IMR-90 (cell line): ENCODE measurements at regions of chr15 and their contacts with region 1.

Region 1: GRCh38 chr15:50145451-50145872 is 26.4 kb upstream of the ATP8B4 start:
- DNase-seq: peak; percentile 88
- ATAC-seq: peak; percentile 86
- H3K4me3 ChIP-seq: no peak overlapping the region
- H3K27ac ChIP-seq: peak overlapping the region; percentile 44
- H3K4me1 ChIP-seq: no peaks in the 10 kb centered on the region; the same call in 1 of the 2 replicates
- H3K27me3 ChIP-seq: no peaks in the 10 kb centered on the region
- CTCF ChIP-seq: peak; percentile 60
- POLR2A ChIP-seq: no peak
- RAD21 ChIP-seq: peak; percentile 83

Region 2: DNA sequence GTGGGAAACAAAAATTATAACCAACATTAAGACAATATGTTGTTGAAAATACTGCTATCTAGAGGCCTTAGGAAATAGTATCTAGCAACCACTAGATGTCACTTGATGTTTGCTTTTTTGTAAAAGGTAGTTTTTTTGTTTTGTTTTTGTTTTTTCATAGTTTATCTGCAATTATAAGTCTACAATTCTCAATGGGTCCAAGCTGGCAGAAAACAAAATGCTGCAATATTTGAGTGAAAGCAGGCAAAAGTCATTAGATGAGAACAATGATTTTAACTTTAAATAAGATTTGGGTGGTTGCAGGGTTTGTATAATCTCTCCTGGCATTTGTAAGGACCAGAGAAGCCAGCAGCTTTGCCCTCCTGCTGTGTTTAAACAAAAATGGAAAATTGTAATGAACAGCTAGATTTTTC is 1787.2 kb before region 1 on chr15:
- CTCF ChIA-PET with region 1: no interaction called
- POLR2A ChIA-PET with region 1: no interaction called
- dilution Hi-C with region 1: no loop called
- in situ Hi-C with region 1: loop called (anchors 10 kb)
- intact Hi-C with region 1: no loop called
- DNase-seq: peak; percentile 64
- ATAC-seq: peak; percentile 59
- H3K4me3 ChIP-seq: no peak overlapping the region
- H3K27ac ChIP-seq: 0 out of 2 replicates have a peak overlapping the region, but pooled peaks have one; percentile 40
- H3K4me1 ChIP-seq: peaks cover 15% of the 10 kb centered on the region
- H3K27me3 ChIP-seq: no peaks in the 10 kb centered on the region
- CTCF ChIP-seq: peak; percentile 75
- POLR2A ChIP-seq: no peak
- RAD21 ChIP-seq: peak; percentile 81

Region 3: GRCh38 chr15:48722764-48723661 is 1422.4 kb before region 1 on chr15:
- CTCF ChIA-PET with region 1: no interaction called
- POLR2A ChIA-PET with region 1: no interaction called
- dilution Hi-C with region 1: no loop called
- in situ Hi-C with region 1: loop called (anchors 25 kb)
- intact Hi-C with region 1: no loop called
- DNase-seq: peak; percentile 94
- ATAC-seq: peak; percentile 91
- H3K4me3 ChIP-seq: no peak overlapping the region
- H3K27ac ChIP-seq: peak overlapping the region; percentile 16
- H3K4me1 ChIP-seq: peaks cover 17% of the 10 kb centered on the region
- H3K27me3 ChIP-seq: no peaks in the 10 kb centered on the region
- CTCF ChIP-seq: no peak
- POLR2A ChIP-seq: no peak
- RAD21 ChIP-seq: no peak

Region 4: DNA sequence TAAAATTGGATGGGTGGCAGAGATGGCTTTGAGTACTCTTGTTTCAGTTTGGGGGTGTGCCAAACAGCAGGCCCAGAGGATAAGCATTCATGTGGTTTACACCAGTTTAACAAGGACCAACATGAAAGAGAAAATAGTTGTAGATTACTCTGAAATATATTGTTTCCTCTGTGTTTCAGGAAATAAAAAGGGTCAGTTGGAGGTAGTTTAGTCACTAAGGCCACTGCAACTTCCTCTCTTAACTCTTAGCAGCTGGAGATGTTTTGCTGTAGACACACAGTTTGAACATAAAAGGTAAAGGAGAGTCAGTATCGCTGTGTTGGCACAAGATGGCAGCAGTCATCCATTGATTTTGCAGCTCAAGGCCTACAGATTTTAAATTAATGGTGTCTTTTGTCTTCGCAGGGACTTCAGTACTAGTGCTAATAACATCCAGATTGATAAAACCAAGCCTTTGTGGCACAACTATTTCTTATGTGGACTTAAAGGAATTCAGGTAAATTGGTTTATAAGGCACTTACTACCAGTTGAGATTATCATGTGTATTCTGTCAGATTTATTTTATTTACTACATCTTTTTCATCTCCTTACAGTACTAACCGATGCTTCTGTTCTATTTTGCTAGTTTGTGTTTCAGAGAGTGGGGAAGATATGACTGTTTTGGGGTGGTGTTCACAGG is 909.9 kb before region 1 on chr15:
- CTCF ChIA-PET with region 1: no interaction called
- POLR2A ChIA-PET with region 1: no interaction called
- dilution Hi-C with region 1: no loop called
- in situ Hi-C with region 1: loop called (anchors 5 kb)
- intact Hi-C with region 1: loop called (anchors 1 kb)
- DNase-seq: peak; percentile 92
- ATAC-seq: peak; percentile 88
- H3K4me3 ChIP-seq: no peak overlapping the region
- H3K27ac ChIP-seq: peak overlapping the region; percentile 70; the same call in 1 of the 2 replicates
- H3K4me1 ChIP-seq: peaks cover 3% of the 10 kb centered on the region
- H3K27me3 ChIP-seq: no peaks in the 10 kb centered on the region
- CTCF ChIP-seq: peak; percentile 91
- POLR2A ChIP-seq: no peak
- RAD21 ChIP-seq: peak; percentile 94

Region 5: GRCh38 chr15:49876401-49877038 is 268.9 kb before region 1 on chr15:
- CTCF ChIA-PET with region 1: no interaction called
- POLR2A ChIA-PET with region 1: no interaction called
- dilution Hi-C with region 1: no loop called
- in situ Hi-C with region 1: no loop called
- intact Hi-C with region 1: loop called (anchors 10 kb)
- DNase-seq: no peak
- ATAC-seq: no peak
- H3K4me3 ChIP-seq: no peak overlapping the region
- H3K27ac ChIP-seq: peak overlapping the region; percentile 98; the same call in 1 of the 2 replicates
- H3K4me1 ChIP-seq: peaks cover 21% of the 10 kb centered on the region
- H3K27me3 ChIP-seq: no peaks in the 10 kb centered on the region
- CTCF ChIP-seq: peak; percentile 32; the same call in 1 of the 2 replicates
- POLR2A ChIP-seq: no peak
- RAD21 ChIP-seq: 0 out of 2 replicates have a peak, but pooled peaks have one; percentile 19

Region 6: DNA sequence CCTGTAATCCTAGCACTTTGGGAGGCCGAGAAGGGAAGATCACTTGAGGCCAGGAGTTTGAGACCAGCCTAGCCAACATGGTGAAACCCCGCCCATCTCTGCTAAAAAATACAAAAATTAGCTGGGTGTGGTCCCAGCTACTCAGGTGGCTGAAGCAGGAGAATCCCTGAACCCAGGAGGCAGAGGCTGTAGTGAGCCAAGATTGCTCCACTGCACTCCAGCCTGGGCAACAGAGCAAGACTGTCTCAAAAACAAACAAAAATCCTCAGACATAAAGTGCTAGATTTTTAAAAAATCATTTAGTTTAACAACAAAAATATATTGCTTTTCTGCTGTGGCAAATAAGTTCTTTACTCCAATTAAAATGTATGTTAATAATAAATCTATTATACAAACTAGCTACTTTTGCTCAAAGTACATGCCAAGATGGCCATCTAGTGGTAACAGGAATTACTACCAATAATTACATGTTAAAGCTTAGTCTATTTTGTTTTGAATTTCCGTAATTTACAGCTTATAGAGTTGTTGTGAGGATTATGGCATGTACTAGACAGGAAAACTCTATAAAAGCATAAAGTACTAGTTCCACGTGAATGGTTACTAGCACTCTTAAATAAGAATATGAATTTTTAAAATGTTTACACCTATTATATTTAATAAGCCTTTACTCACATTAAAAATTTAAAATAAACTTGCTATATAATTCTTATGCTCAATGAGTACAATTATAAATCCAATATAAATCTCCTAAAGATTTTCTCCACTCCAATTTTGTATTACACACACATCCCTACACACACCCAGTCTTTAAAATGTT is 170.6 kb after region 1 on chr15:
- CTCF ChIA-PET with region 1: interaction called, 4 read pairs
- POLR2A ChIA-PET with region 1: no interaction called
- dilution Hi-C with region 1: no loop called
- in situ Hi-C with region 1: no loop called
- intact Hi-C with region 1: loop called (anchors 1 kb)
- DNase-seq: peak; percentile 68
- ATAC-seq: peak; percentile 81
- H3K4me3 ChIP-seq: no peak overlapping the region
- H3K27ac ChIP-seq: no peak overlapping the region
- H3K4me1 ChIP-seq: peaks cover 2% of the 10 kb centered on the region; the same call in 1 of the 2 replicates
- H3K27me3 ChIP-seq: no peaks in the 10 kb centered on the region
- CTCF ChIP-seq: peak; percentile 71
- POLR2A ChIP-seq: no peak
- RAD21 ChIP-seq: peak; percentile 77

Region 7: GRCh38 chr15:50726315-50726714 is 580.9 kb after region 1 on chr15:
- CTCF ChIA-PET with region 1: no interaction called
- POLR2A ChIA-PET with region 1: no interaction called
- dilution Hi-C with region 1: no loop called
- in situ Hi-C with region 1: no loop called
- intact Hi-C with region 1: no loop called
- DNase-seq: no peak
- ATAC-seq: no peak
- H3K4me3 ChIP-seq: no peak overlapping the region
- H3K27ac ChIP-seq: no peak overlapping the region
- H3K4me1 ChIP-seq: no peaks in the 10 kb centered on the region; the same call in 1 of the 2 replicates
- H3K27me3 ChIP-seq: no peaks in the 10 kb centered on the region
- CTCF ChIP-seq: no peak
- POLR2A ChIP-seq: no peak
- RAD21 ChIP-seq: no peak